T-cell (primary cell): ENCODE measurements at regions of chr10 and their contacts with region 1.

Region 1: GRCh38 chr10:77173615-77174461 is 463.8 kb downstream of the KCNMA1 start:
- DNase-seq: peak in 34 of 35 experiments; percentile 2 to 79 (median 53)
- ATAC-seq: peak in 3 of 4 experiments; percentile 46 to 54 (median 50)
- H3K4me3 ChIP-seq: no peak overlapping the region
- H3K4me3 Mint-ChIP-seq: no peak overlapping the region
- H3K27ac ChIP-seq: no peak overlapping the region
- H3K27ac Mint-ChIP-seq: no peak overlapping the region
- H3K4me1 ChIP-seq: no peaks in the 10 kb centered on the region
- H3K4me1 Mint-ChIP-seq: no peaks in the 10 kb centered on the region
- H3K27me3 ChIP-seq: peaks cover 0 to 3% of the 10 kb centered on the region in 2 experiments
- H3K27me3 Mint-ChIP-seq: peaks cover 5 to 15% of the 10 kb centered on the region in 2 donors

Region 2: DNA sequence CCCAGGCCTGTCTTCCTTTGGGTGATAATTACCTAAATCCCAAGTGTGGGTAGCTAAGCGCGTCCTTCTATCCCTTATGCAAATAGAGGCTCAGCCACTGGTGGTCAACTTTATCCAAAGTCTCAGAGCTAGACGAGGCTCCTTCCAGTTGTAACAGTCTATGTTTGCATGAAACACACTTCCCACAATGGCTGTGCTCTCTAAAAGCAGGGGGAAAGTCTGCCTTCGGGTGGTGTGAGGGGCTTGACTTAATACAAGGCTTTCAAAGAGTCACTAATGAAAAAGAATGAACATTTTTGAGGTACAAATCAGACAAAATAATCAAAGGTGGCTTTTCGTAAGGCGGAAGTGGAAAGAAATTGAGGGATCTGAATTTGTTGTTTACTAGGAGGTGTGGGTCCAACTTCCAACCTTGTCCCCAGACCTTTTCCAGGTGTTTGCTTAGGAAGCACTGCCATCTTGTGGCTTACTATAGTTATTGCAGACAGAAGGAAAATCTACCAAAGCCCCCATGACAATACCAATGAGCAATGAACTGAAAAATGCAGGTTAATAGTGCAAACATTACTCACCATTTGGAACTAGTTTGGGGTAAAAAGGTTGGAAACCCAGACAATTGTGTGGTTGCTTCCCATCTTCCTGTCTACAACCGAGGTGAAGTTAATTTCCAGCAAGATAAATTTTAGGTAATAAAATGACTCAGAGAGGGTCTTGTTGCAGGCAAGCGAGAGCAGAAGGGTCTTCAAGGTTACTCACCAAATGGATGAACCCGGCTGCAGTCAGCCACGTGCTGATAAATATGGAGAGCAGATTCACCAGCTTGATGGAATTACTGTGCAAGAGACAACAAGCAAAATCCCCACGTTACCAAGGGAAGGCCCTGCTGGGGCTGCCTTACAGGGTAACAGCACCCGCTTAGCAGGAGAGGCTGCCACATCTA is 62.0 kb before region 1 on chr10:
- CTCF ChIA-PET with region 1: no interaction called
- POLR2A ChIA-PET with region 1: no interaction called
- DNase-seq: peak in 3 of 35 experiments; percentile 4 to 50 (median 5)
- ATAC-seq: no peak
- H3K4me3 ChIP-seq: no peak overlapping the region
- H3K4me3 Mint-ChIP-seq: no peak overlapping the region
- H3K27ac ChIP-seq: no peak overlapping the region
- H3K27ac Mint-ChIP-seq: no peak overlapping the region
- H3K4me1 ChIP-seq: no peaks in the 10 kb centered on the region
- H3K4me1 Mint-ChIP-seq: no peaks in the 10 kb centered on the region
- H3K27me3 ChIP-seq: no peaks in the 10 kb centered on the region
- H3K27me3 Mint-ChIP-seq: peaks cover 0 to 2% of the 10 kb centered on the region in 2 donors

Region 3: GRCh38 chr10:77290528-77291155 is 116.8 kb after region 1 on chr10:
- CTCF ChIA-PET with region 1: no interaction called
- POLR2A ChIA-PET with region 1: no interaction called
- DNase-seq: no peak
- ATAC-seq: no peak
- H3K4me3 ChIP-seq: no peak overlapping the region
- H3K4me3 Mint-ChIP-seq: no peak overlapping the region
- H3K27ac ChIP-seq: no peak overlapping the region
- H3K27ac Mint-ChIP-seq: no peak overlapping the region
- H3K4me1 ChIP-seq: no peaks in the 10 kb centered on the region
- H3K4me1 Mint-ChIP-seq: peaks cover 0 to 2% (median 0%) of the 10 kb centered on the region in 3 donors
- H3K27me3 ChIP-seq: no peaks in the 10 kb centered on the region
- H3K27me3 Mint-ChIP-seq: peaks cover 0 to 5% of the 10 kb centered on the region in 2 donors

Region 4: DNA sequence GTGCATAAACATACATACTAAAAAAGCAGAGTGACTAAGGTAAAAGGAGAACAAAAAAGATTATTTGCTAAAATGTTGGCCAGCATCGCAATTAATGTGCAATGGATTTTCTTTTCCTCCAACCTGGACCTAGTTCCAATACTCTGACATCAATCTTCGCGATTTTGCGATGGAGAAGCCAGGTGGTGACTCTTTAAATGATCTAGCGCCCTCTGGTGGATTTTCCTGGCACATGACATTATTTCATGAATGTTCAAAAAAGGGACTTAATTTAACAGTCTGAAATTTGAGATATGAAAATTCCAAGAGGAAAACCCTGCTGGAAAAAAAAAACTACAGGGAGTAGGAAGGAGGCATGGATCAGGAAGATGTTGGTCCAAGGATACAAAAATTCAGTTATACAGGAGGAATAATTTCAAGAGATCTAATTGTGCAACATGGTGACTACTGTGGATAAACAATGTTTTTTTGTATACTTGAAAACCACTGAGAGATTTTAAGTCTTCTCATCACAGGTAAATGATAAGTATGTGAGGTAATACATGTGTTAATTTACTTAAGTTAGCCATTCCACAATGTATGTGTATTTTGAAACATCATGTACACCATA is 468.1 kb after region 1 on chr10:
- CTCF ChIA-PET with region 1: interaction called, 18 to 19 read pairs
- POLR2A ChIA-PET with region 1: no interaction called
- DNase-seq: peak in 27 of 35 experiments; percentile 5 to 72 (median 31)
- ATAC-seq: no peak
- H3K4me3 ChIP-seq: no peak overlapping the region
- H3K4me3 Mint-ChIP-seq: no peak overlapping the region
- H3K27ac ChIP-seq: no peak overlapping the region
- H3K27ac Mint-ChIP-seq: no peak overlapping the region
- H3K4me1 ChIP-seq: no peaks in the 10 kb centered on the region
- H3K4me1 Mint-ChIP-seq: peaks cover 0 to 10% (median 9%) of the 10 kb centered on the region in 3 donors
- H3K27me3 ChIP-seq: peaks cover 6 to 30% of the 10 kb centered on the region in 2 experiments
- H3K27me3 Mint-ChIP-seq: peaks cover 34 to 46% of the 10 kb centered on the region in 2 donors

Region 5: GRCh38 chr10:77763453-77764430 is 589.9 kb after region 1 on chr10:
- CTCF ChIA-PET with region 1: no interaction called
- POLR2A ChIA-PET with region 1: interaction called in 1 of 2 experiments, 10 read pairs
- DNase-seq: no peak
- ATAC-seq: no peak
- H3K4me3 ChIP-seq: no peak overlapping the region
- H3K4me3 Mint-ChIP-seq: no peak overlapping the region
- H3K27ac ChIP-seq: no peak overlapping the region
- H3K27ac Mint-ChIP-seq: no peak overlapping the region
- H3K4me1 ChIP-seq: no peaks in the 10 kb centered on the region
- H3K4me1 Mint-ChIP-seq: no peaks in the 10 kb centered on the region
- H3K27me3 ChIP-seq: peaks cover 0 to 3% of the 10 kb centered on the region in 2 experiments
- H3K27me3 Mint-ChIP-seq: no peaks in the 10 kb centered on the region